Panc1 (cell line): ENCODE measurements at regions of chr9 and their contacts with region 1.

Region 1: GRCh38 chr9:132406554-132407122 is at the start of gene TTF1:
- DNase-seq: no peak
- ATAC-seq: peak; percentile 91
- H3K4me3 ChIP-seq: peak within 1 kb of the TSS; percentile 55 to 79
- H3K27ac ChIP-seq: peak within 1 kb of the TSS; percentile 83
- H3K4me1 ChIP-seq: peaks cover 9% of the 10 kb centered on the region
- H3K27me3 ChIP-seq: no peaks in the 10 kb centered on the region
- CTCF ChIP-seq: no peak
- total RNA-seq, gene TTF1: 8.4 TPM

Region 2: GRCh38 chr9:131627648-131628458 is 778.8 kb before region 1 on chr9:
- CTCF ChIA-PET with region 1: no interaction called
- POLR2A ChIA-PET with region 1: interaction called, 10 read pairs
- in situ Hi-C with region 1: no loop called
- intact Hi-C with region 1: no loop called
- DNase-seq: no peak
- ATAC-seq: no peak
- H3K4me3 ChIP-seq: no peak overlapping the region
- H3K27ac ChIP-seq: no peak overlapping the region
- H3K4me1 ChIP-seq: no peaks in the 10 kb centered on the region
- H3K27me3 ChIP-seq: no peaks in the 10 kb centered on the region
- CTCF ChIP-seq: no peak

Region 3: GRCh38 chr9:132439153-132439552 is 32.5 kb after region 1 on chr9:
- CTCF ChIA-PET with region 1: no interaction called
- POLR2A ChIA-PET with region 1: no interaction called
- in situ Hi-C with region 1: no loop called
- intact Hi-C with region 1: no loop called
- DNase-seq: no peak
- ATAC-seq: no peak
- H3K4me3 ChIP-seq: no peak overlapping the region
- H3K27ac ChIP-seq: no peak overlapping the region
- H3K4me1 ChIP-seq: no peaks in the 10 kb centered on the region
- H3K27me3 ChIP-seq: no peaks in the 10 kb centered on the region
- CTCF ChIP-seq: no peak

Region 4: DNA sequence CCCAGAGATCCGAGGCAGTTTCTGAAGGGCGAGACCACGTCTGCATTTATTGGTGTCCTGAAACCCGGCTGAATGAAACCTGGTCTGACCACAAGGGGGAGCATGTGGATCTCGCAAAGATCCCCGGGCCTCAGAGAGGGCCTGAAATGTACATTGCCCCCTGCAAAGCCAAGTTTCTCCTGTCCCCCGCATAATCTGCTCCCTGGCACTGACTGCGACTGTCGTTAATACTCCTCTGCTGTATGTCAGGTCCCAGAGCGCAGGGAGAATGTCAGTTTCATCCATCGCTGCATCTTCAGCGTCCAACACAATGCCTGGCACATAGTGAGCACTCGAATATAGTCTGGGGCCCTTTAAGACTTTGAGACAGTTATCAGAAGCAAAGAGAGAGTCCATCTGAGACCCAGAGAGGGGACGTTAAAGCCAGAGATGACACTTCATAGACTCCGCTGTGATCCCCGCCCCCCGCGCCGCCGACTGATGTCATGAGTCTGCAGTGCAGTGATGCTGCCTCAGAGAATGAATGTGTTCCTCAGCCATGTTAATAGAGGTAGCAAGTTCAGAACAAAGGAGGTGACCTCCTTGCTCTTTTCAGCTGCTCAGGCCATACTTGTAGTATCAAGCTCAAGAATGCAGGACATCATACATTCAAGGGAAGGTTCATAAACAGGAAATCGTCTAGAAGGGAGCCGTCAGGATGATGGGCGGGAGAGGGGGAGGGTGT is 101.3 kb after region 1 on chr9:
- CTCF ChIA-PET with region 1: no interaction called
- POLR2A ChIA-PET with region 1: no interaction called
- in situ Hi-C with region 1: no loop called
- intact Hi-C with region 1: loop called (anchors 5 kb)
- DNase-seq: peak; percentile 32
- ATAC-seq: peak; percentile 88
- H3K4me3 ChIP-seq: no peak overlapping the region
- H3K27ac ChIP-seq: no peak overlapping the region
- H3K4me1 ChIP-seq: no peaks in the 10 kb centered on the region
- H3K27me3 ChIP-seq: no peaks in the 10 kb centered on the region; the same call in 1 of the 2 replicates
- CTCF ChIP-seq: peak; percentile 83

Region 5: DNA sequence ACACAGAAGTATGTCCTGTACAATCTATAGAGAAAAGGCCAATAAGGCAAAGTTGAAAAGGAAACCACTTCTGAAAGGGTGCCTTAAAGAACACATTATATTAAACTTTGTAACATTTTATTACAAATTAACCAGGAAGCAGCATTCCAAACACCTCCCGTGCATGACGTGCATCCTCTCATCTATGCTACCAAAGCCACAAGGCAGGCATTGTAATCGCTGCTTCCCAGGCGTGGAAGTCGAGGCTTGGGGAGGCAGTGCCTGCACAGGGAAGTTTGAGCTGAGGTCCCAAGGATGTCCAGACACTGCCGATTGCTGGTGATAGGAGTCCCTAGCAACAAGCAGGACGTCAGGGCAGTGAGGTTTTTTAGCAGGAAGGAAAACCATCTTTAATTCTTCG is 131.4 kb after region 1 on chr9:
- CTCF ChIA-PET with region 1: no interaction called
- POLR2A ChIA-PET with region 1: interaction called, 10 read pairs
- in situ Hi-C with region 1: no loop called
- intact Hi-C with region 1: no loop called
- DNase-seq: no peak
- ATAC-seq: no peak
- H3K4me3 ChIP-seq: no peak overlapping the region
- H3K27ac ChIP-seq: no peak overlapping the region
- H3K4me1 ChIP-seq: no peaks in the 10 kb centered on the region
- H3K27me3 ChIP-seq: no peaks in the 10 kb centered on the region
- CTCF ChIP-seq: no peak

Region 6: GRCh38 chr9:132575005-132575609 is 168.5 kb after region 1 on chr9:
- CTCF ChIA-PET with region 1: interaction called, 3 read pairs
- POLR2A ChIA-PET with region 1: no interaction called
- in situ Hi-C with region 1: no loop called
- intact Hi-C with region 1: loop called (anchors 5 kb)
- DNase-seq: peak; percentile 13
- ATAC-seq: peak; percentile 95
- H3K4me3 ChIP-seq: no peak overlapping the region
- H3K27ac ChIP-seq: no peak overlapping the region
- H3K4me1 ChIP-seq: no peaks in the 10 kb centered on the region
- H3K27me3 ChIP-seq: peaks cover 7% of the 10 kb centered on the region; the same call in 1 of the 2 replicates
- CTCF ChIP-seq: peak; percentile 88